OCI-LY7 (cell line): ENCODE measurements at regions of chrX and their contacts with region 1.

Region 1: DNA sequence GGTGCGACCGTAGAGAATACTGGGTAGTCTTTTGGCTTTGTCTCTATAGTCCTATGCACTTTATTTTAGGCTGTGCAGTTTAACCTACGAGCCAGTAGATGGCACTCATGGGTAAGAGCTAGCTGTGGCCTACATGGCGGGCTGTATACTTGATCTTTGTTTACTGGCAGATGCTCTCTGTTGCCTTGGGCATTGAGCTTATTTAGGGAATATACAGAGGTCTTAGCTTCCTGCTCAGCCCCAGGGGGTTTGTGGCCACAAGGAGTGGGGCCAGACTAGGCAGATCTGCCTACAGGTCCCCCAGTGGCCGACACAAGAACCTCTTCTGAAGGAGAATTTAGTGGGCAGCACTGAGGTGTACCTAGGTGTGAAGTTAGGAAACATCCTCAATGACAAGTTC is 227.6 kb upstream of the HDX start:
- DNase-seq: peak; percentile 58
- H3K4me3 ChIP-seq: no peak overlapping the region
- H3K27ac ChIP-seq: no peak overlapping the region
- H3K4me1 ChIP-seq: peaks cover 5% of the 10 kb centered on the region
- CTCF ChIP-seq: peak; percentile 80

Region 2: GRCh38 chrX:84690228-84690627 is 39.6 kb before region 1 on chrX:
- CTCF ChIA-PET with region 1: no interaction called
- POLR2A ChIA-PET with region 1: no interaction called
- intact Hi-C with region 1: no loop called
- DNase-seq: no peak
- H3K4me3 ChIP-seq: no peak overlapping the region
- H3K27ac ChIP-seq: no peak overlapping the region
- H3K4me1 ChIP-seq: no peaks in the 10 kb centered on the region
- CTCF ChIP-seq: no peak

Region 3: DNA sequence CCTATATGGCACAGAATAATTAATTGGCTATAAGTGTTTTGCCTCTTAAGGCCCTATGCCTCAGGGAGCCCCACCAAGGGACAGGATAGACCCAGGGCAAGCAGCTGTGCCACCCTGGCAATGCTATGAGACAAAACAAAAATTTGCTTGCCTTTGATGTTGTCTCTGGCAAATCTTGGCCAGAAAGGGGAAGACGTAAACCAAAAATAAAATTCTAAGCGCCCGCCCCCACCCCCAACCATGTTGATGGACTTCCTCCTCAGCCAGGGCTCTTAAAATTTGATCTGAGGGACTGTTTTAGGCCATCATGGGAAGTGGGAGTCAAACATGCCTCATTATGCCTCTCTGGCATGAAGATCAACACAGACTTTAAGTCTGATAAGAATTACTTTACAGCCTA is 143.4 kb after region 1 on chrX:
- CTCF ChIA-PET with region 1: no interaction called
- POLR2A ChIA-PET with region 1: no interaction called
- intact Hi-C with region 1: loop called (anchors 10 kb)
- DNase-seq: peak; percentile 58
- H3K4me3 ChIP-seq: no peak overlapping the region
- H3K27ac ChIP-seq: peak overlapping the region; percentile 53
- H3K4me1 ChIP-seq: peaks cover 16% of the 10 kb centered on the region
- CTCF ChIP-seq: no peak

Region 4: GRCh38 chrX:84893897-84894296 is 164.1 kb after region 1 on chrX:
- CTCF ChIA-PET with region 1: no interaction called
- POLR2A ChIA-PET with region 1: no interaction called
- intact Hi-C with region 1: no loop called
- DNase-seq: no peak
- H3K4me3 ChIP-seq: no peak overlapping the region
- H3K27ac ChIP-seq: no peak overlapping the region
- H3K4me1 ChIP-seq: no peaks in the 10 kb centered on the region
- CTCF ChIP-seq: no peak

Region 5: GRCh38 chrX:84907324-84907968 is 177.6 kb after region 1 on chrX:
- CTCF ChIA-PET with region 1: no interaction called
- POLR2A ChIA-PET with region 1: no interaction called
- intact Hi-C with region 1: loop called (anchors 5 kb)
- DNase-seq: peak; percentile 0
- H3K4me3 ChIP-seq: no peak overlapping the region
- H3K27ac ChIP-seq: no peak overlapping the region
- H3K4me1 ChIP-seq: no peaks in the 10 kb centered on the region
- CTCF ChIP-seq: peak; percentile 58

Region 6: DNA sequence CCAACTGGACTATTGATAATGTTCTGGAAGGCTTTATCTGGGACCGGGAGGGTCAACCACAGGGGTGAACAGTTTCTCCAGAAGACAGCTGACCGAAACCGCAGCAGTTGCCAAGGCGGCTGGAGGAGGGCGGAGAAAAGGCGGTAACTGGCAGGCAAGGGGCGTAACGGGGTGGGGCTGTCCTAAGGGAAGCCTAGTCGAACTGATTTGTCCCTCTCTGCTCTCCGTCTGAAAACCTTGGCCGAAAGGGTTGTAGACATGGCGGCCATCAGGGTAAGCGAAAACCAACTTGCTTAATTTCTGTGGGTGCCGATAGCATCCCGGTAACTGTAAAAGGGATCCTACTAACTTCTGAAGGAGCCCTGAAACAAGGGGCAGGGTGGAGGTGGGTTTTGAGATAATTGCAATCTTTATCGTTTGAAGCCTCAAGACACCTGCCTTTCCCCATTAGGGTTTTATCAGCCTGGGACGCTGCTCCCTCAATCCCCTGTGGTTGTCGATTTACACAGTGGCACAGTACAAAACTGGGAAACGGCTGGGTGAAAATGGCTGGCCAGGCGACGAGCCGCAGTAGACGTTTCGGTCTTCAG is 273.9 kb after region 1 on chrX and contains the start of gene APOOL:
- CTCF ChIA-PET with region 1: no interaction called
- POLR2A ChIA-PET with region 1: no interaction called
- intact Hi-C with region 1: loop called (anchors 5 kb)
- DNase-seq: peak; percentile 79
- H3K4me3 ChIP-seq: peak within 1 kb of the TSS; percentile 78
- H3K27ac ChIP-seq: peak within 1 kb of the TSS; percentile 5
- H3K4me1 ChIP-seq: no peaks in the 10 kb centered on the region
- CTCF ChIP-seq: no peak
- total RNA-seq, gene APOOL: 2.9 and 8.9 TPM in 2 replicates

Region 7: GRCh38 chrX:85203461-85203970 is 473.7 kb after region 1 on chrX:
- CTCF ChIA-PET with region 1: no interaction called
- POLR2A ChIA-PET with region 1: no interaction called
- intact Hi-C with region 1: no loop called
- DNase-seq: no peak
- H3K4me3 ChIP-seq: no peak overlapping the region
- H3K27ac ChIP-seq: no peak overlapping the region
- H3K4me1 ChIP-seq: no peaks in the 10 kb centered on the region
- CTCF ChIP-seq: no peak